T-cell (primary cell): ENCODE measurements at regions of chr9 and their contacts with region 1.

Region 1: DNA sequence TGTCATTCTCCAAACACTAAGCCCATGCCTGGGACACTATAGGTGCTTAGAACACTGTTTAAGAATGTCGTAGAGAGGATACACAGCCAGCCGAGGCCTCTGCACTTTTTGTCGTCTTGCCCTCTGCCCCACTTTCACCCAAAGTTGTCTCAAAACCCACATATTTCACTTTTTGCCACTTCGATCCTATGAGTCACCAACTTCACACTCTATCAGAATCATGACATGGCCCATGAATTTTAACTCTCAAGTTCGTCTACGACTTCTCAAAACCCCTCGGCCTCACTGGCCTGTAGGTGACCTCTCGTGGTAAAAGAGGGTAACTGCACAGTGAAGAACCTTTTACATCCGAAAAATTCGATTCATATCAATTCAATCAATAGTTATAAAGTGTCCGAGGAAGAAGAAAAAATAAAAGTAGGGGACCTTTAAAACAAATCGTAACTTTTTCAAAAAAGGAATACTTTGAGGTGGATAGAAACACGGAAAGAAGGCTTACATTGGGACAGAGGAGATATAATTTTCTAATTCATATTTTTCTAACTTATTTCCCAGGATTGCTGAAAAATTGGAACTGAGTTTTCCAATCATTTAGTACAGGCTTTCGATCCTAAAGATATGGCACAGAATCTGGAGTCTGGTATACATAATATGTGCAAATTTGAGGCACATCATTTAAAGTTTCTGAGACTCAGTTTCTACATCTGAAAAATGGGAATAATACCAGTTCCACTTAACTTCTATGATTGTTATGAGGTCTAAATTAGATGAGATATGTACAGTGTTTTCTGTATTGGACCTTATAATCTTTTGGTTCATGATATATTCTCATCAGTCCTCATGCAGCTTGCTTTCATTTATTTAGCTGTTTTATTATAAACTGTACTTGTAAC is 122.6 kb downstream of the APBA1 start:
- DNase-seq: peak in 12 of 35 experiments; percentile 2 to 50 (median 10)
- ATAC-seq: peak in 3 of 4 experiments; percentile 23 to 40 (median 23)
- H3K4me3 ChIP-seq: no peak overlapping the region
- H3K4me3 Mint-ChIP-seq: no peak overlapping the region
- H3K27ac ChIP-seq: no peak overlapping the region
- H3K27ac Mint-ChIP-seq: no peak overlapping the region
- H3K4me1 ChIP-seq: no peaks in the 10 kb centered on the region
- H3K4me1 Mint-ChIP-seq: peaks cover 4 to 5% (median 4%) of the 10 kb centered on the region in 3 donors
- H3K27me3 ChIP-seq: peaks cover 0 to 2% of the 10 kb centered on the region in 2 experiments
- H3K27me3 Mint-ChIP-seq: peaks cover 5 to 28% of the 10 kb centered on the region in 2 donors

Region 2: DNA sequence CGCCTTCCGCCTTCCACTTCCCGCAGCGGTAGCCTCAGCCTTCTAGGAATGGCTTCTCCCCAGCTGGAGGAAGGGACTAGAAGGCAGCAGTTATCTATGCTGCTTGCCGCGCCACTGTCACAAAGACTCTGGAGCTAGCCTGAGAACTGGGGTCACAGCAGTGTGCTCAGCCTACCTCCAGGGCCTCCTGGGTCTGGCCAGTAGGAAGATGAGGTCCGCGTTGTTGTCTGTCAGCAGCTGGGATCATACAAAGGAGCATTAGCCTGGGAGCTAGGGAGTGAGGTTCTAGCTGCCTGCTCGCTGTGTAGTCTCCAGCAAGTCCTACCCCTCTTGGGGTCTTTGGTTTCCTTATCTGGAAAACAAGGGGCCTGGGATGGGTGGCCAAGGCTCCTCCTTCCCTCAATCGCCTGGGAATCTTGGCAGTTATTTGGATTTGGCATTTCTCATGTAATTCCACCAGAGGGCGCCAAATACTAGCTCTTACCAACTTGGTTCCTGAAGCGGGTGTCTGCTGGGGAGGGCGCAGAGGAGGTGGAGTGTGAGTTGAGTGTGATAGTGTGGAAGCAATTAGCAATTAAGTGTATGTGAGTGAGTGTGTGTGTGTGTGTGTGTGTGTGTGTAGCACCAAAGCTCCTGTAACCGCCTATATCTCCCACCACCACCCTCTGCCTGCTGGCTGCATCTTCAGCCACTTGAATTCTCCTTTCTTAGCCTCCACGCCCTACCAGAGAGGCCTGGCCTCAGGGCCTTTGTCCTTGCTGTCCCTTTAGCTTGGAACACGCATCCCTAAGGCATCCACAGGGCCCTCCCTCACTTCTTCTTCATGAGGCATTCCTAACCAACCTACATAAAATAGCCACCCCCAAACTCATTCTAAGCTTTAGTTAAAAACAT is 127.4 kb before region 1 on chr9:
- CTCF ChIA-PET with region 1: interaction called, 18 to 20 read pairs
- POLR2A ChIA-PET with region 1: no interaction called
- DNase-seq: peak in 27 of 35 experiments; percentile 3 to 67 (median 21)
- ATAC-seq: peak in 3 of 4 experiments; percentile 39 to 44 (median 40)
- H3K4me3 ChIP-seq: no peak overlapping the region
- H3K4me3 Mint-ChIP-seq: no peak overlapping the region
- H3K27ac ChIP-seq: no peak overlapping the region
- H3K27ac Mint-ChIP-seq: no peak overlapping the region
- H3K4me1 ChIP-seq: peaks cover 0 to 5% of the 10 kb centered on the region in 2 experiments
- H3K4me1 Mint-ChIP-seq: peaks cover 0 to 7% (median 2%) of the 10 kb centered on the region in 3 donors
- H3K27me3 ChIP-seq: peaks cover 0 to 21% of the 10 kb centered on the region in 2 experiments
- H3K27me3 Mint-ChIP-seq: peaks cover 11 to 14% of the 10 kb centered on the region in 2 donors